ENCODE measurements at regions of chr19 and their contacts with region 1.

Region 1: GRCh38 chr19:49097455-49098288 is 12.4 kb downstream of the SNRNP70 start:
- DNase-seq: no peak
- ATAC-seq: peak; percentile 90
- H3K4me3 ChIP-seq: no peak overlapping the region
- H3K27ac ChIP-seq: no peak overlapping the region
- H3K4me1 ChIP-seq: no peaks in the 10 kb centered on the region
- H3K27me3 ChIP-seq: no peaks in the 10 kb centered on the region
- CTCF ChIP-seq: peak; percentile 96 to 98 (median 98); a peak in 5 of 6 replicates
- EP300 ChIP-seq: no peak
- POLR2A ChIP-seq: no peak
- RAD21 ChIP-seq: peak; percentile 85

Region 2: DNA sequence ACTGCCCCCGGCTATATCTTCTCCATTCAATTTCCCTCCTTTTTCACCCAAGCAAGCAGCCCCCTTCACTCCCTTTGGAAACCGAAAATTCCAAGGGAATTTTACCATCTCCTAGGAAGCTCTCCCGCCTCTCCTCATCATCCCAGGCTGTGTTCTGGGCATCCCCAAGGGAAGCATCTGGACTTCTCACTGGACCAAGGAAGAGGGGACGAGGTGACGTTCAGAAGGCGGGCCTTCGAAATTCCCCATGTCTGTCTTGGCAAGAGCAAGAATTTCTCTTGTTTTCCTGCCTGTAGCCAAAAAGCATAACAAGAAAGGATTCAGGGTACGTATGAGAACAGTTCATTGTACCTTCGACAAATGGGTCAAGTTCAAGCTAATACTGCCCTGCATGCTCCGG is 1232.5 kb before region 1 on chr19:
- CTCF ChIA-PET with region 1: no interaction called
- POLR2A ChIA-PET with region 1: no interaction called
- RAD21 ChIA-PET with region 1: no interaction called
- SMC1A ChIA-PET with region 1: no interaction called
- in situ Hi-C with region 1: no loop called
- intact Hi-C with region 1: no loop called
- DNase-seq: no peak
- ATAC-seq: no peak
- H3K4me3 ChIP-seq: no peak overlapping the region
- H3K27ac ChIP-seq: no peak overlapping the region
- H3K4me1 ChIP-seq: no peaks in the 10 kb centered on the region
- H3K27me3 ChIP-seq: no peaks in the 10 kb centered on the region
- CTCF ChIP-seq: no peak
- EP300 ChIP-seq: no peak
- POLR2A ChIP-seq: no peak
- RAD21 ChIP-seq: no peak

Region 3: DNA sequence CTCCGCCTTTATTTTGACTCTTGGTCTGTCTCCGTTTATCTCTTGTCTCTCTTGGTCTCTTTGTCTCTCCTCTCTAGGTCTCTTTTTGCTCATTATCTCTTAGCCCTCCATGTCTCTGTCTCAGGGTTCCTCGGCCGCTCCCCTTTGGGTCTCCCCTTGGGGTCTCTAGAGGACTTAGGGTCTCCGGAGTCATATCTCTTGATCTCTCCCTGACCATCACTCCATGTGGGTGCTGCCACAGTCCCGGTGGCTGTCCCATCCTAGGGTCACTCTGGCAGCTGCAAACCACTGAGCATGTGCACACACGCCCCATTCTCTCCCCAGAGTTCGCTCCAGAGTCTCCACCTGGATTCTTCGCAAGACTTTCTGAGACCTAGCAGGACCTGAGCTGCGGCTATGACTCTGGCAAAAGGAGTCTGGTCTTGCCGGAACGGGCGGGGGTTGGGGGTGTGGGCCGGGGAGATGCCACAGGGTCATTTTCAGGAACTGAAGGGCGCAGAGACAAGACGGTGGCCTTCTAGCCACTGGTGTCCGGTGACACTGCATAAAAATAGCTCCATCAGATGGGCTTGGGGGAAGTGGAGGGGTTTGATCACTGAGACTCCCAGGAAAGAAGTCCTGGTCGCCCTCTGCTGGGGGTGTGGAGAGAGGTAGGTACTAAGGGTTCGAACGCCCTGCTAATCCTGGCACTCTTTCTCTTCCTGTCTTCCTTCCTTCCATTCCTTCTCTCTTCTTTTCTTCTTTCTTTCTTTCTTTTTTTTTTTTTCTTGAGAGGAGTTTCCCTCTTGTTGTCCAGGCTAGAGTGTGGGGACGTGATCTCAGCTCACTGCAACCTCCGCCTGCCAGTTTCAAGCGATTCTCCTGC is 23.9 kb before region 1 on chr19:
- CTCF ChIA-PET with region 1: interaction called, 11 read pairs
- POLR2A ChIA-PET with region 1: interaction called, 8 read pairs
- RAD21 ChIA-PET with region 1: no interaction called
- SMC1A ChIA-PET with region 1: interaction called, 3 read pairs
- in situ Hi-C with region 1: no loop called
- intact Hi-C with region 1: no loop called
- DNase-seq: no peak
- ATAC-seq: peak; percentile 41; the same call in 2 of the 3 replicates
- H3K4me3 ChIP-seq: no peak overlapping the region
- H3K27ac ChIP-seq: no peak overlapping the region
- H3K4me1 ChIP-seq: no peaks in the 10 kb centered on the region
- H3K27me3 ChIP-seq: peaks cover 0 to 3% of the 10 kb centered on the region in 2 experiments; a peak in 3 of 4 replicates
- CTCF ChIP-seq: peak in 2 of 3 experiments; percentile 12 to 34; a peak in 2 of 6 replicates
- EP300 ChIP-seq: no peak
- POLR2A ChIP-seq: no peak
- RAD21 ChIP-seq: no peak

Region 4: GRCh38 chr19:49118565-49119410 is 21.1 kb after region 1 on chr19 and contains the start of gene C19orf73:
- CTCF ChIA-PET with region 1: interaction called, 37 read pairs
- POLR2A ChIA-PET with region 1: no interaction called
- RAD21 ChIA-PET with region 1: interaction called, 4 read pairs
- SMC1A ChIA-PET with region 1: interaction called, 5 read pairs
- in situ Hi-C with region 1: no loop called
- intact Hi-C with region 1: no loop called
- DNase-seq: peak; percentile 69
- ATAC-seq: peak; percentile 91
- H3K4me3 ChIP-seq: peak within 1 kb of the TSS; percentile 60; the same call in 1 of the 2 replicates
- H3K27ac ChIP-seq: peak within 1 kb of the TSS; percentile 73
- H3K4me1 ChIP-seq: peaks cover 9% of the 10 kb centered on the region
- H3K27me3 ChIP-seq: peaks cover 7 to 8% of the 10 kb centered on the region in 2 experiments
- CTCF ChIP-seq: peak in 1 of 3 experiments; percentile 35; a peak in 1 of 6 replicates
- EP300 ChIP-seq: no peak
- POLR2A ChIP-seq: peak; percentile 78
- RAD21 ChIP-seq: no peak
- polyA plus RNA-seq, gene C19orf73: 0.20 to 0.69 TPM

Region 5: DNA sequence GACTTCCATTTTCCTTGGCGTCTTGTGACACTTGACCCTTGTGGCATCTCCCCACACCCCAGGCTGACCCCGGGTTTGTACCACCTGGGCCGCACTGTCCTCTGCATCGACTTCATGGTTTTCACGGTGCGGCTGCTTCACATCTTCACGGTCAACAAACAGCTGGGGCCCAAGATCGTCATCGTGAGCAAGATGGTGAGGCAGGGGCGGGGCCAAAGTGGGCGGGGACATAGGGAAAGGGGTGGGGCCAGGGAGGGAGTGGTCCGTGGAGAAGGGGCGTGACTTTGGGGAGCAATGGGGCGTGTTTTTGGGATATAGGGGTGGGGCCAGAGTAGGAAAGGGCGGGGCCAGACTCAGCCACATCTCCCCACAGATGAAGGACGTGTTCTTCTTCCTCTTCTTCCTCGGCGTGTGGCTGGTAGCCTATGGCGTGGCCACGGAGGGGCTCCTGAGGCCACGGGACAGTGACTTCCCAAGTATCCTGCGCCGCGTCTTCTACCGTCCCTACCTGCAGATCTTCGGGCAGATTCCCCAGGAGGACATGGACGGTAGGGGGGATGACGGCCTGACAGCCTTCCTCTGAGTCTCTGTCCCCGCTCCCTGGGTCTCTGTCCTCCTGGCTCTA is 102.7 kb after region 1 on chr19:
- CTCF ChIA-PET with region 1: interaction called, 56 read pairs
- POLR2A ChIA-PET with region 1: interaction called, 3 read pairs
- RAD21 ChIA-PET with region 1: interaction called, 19 read pairs
- SMC1A ChIA-PET with region 1: interaction called, 22 read pairs
- in situ Hi-C with region 1: loop called (anchors 5 kb)
- intact Hi-C with region 1: no loop called
- DNase-seq: no peak
- ATAC-seq: 0 out of 3 replicates have a peak, but pooled peaks have one; percentile 25
- H3K4me3 ChIP-seq: no peak overlapping the region
- H3K27ac ChIP-seq: no peak overlapping the region
- H3K4me1 ChIP-seq: no peaks in the 10 kb centered on the region
- H3K27me3 ChIP-seq: no peaks in the 10 kb centered on the region
- CTCF ChIP-seq: no peak
- EP300 ChIP-seq: no peak
- POLR2A ChIP-seq: no peak
- RAD21 ChIP-seq: no peak

Region 6: DNA sequence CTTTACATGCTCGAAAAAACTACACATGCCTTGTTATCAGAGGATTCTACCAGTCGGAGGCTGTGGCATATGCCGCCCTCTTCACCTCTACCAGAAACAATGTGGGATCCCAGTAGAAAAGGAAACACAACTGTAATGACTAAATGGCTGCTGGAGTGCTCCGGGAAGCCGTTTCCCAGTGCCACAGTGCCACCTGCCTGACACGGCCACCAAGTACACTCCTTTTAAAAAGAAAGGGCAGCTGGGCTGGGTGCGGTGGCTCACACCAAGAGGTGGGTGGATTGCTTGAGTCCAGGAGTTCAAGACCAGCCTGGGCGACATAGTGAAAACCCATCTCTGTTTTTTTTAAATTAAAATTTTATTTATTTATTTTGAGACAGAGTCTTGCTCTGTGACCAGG is 127.2 kb after region 1 on chr19:
- CTCF ChIA-PET with region 1: interaction called, 11 read pairs
- POLR2A ChIA-PET with region 1: interaction called, 3 read pairs
- RAD21 ChIA-PET with region 1: interaction called, 8 read pairs
- SMC1A ChIA-PET with region 1: interaction called, 5 read pairs
- in situ Hi-C with region 1: no loop called
- intact Hi-C with region 1: no loop called
- DNase-seq: no peak
- ATAC-seq: peak; percentile 90
- H3K4me3 ChIP-seq: no peak overlapping the region
- H3K27ac ChIP-seq: no peak overlapping the region
- H3K4me1 ChIP-seq: no peaks in the 10 kb centered on the region
- H3K27me3 ChIP-seq: no peaks in the 10 kb centered on the region; a peak in 1 of 4 replicates
- CTCF ChIP-seq: peak; percentile 41 to 60 (median 42); a peak in 5 of 6 replicates
- EP300 ChIP-seq: no peak
- POLR2A ChIP-seq: no peak
- RAD21 ChIP-seq: peak; percentile 66